CD4-positive, alpha-beta T cell (primary cell): ENCODE measurements at regions of chr11 and their contacts with region 1.

Region 1: DNA sequence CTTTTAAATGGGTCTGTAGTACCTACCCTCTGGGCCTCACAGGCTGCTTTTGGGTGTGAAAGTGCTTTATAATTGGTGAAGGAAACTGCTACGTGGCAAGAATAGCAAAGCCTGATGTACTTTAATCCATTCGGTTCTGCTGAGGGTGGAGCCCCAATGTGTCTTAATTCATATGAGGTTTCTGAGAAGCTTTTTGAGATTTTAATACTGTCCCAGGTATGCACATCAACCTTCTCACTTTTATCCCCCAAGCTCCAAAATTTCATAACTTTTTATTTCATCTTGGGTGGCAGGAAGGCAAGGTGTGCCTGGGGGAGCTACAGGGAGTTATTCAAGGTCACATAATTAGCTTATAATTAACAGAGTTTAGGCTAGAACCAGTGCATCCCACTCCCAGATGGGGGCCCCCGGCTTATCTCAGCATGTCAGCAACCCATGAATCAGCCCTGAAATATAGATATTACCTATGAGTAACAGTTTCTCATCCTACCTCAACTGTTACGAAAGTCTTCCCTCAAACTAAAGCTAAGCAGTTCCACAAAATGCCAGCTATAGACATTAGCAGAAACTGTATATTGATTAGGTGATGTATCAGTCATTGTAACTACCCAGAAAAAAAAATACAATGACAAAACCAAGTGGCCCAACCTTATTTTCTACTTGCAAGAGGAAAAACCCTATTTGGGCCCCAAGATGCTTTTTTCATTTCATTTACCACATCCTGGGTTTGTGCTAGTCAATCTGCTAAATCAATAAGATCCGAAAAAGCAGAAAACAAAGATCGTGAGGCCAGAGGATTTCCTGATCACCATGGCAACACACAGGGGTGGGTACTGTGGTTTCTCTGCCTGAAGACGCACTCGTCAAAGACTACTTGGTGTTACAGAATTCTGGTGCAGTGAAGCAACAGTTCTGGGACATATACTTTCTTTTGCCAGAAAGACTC is 26.7 kb downstream of the CD44 start:
- DNase-seq: peak; percentile 70 to 99 (median 80)
- ATAC-seq: peak; percentile 69
- H3K4me3 ChIP-seq: peak overlapping the region; percentile 40
- H3K4me3 Mint-ChIP-seq: peak overlapping the region; percentile 72
- H3K27ac ChIP-seq: peak overlapping the region; percentile 96
- H3K27ac Mint-ChIP-seq: peak overlapping the region; percentile 96
- H3K4me1 ChIP-seq: peaks cover 97% of the 10 kb centered on the region
- H3K4me1 Mint-ChIP-seq: peaks cover 100% of the 10 kb centered on the region
- H3K27me3 ChIP-seq: no peaks in the 10 kb centered on the region
- H3K27me3 Mint-ChIP-seq: no peaks in the 10 kb centered on the region
- CTCF ChIP-seq: no peak

Region 2: GRCh38 chr11:34105079-34105956 is 1060.4 kb before region 1 on chr11 and contains the start of gene NAT10:
- CTCF ChIA-PET with region 1: no interaction called
- POLR2A ChIA-PET with region 1: no interaction called
- intact Hi-C with region 1: loop called in 1 of 2 experiments (anchors 10 kb)
- DNase-seq: peak; percentile 94 to 100 (median 97)
- ATAC-seq: peak; percentile 90
- H3K4me3 ChIP-seq: peak within 1 kb of the TSS; percentile 81
- H3K4me3 Mint-ChIP-seq: peak within 1 kb of the TSS; percentile 95
- H3K27ac ChIP-seq: peak within 1 kb of the TSS; percentile 91 to 95
- H3K27ac Mint-ChIP-seq: peak within 1 kb of the TSS; percentile 99
- H3K4me1 ChIP-seq: peaks cover 31% of the 10 kb centered on the region
- H3K4me1 Mint-ChIP-seq: peaks cover 69% of the 10 kb centered on the region
- H3K27me3 ChIP-seq: no peaks in the 10 kb centered on the region
- H3K27me3 Mint-ChIP-seq: peaks cover 4% of the 10 kb centered on the region
- CTCF ChIP-seq: no peak
- total RNA-seq, gene NAT10: 50.1 to 55.6 TPM

Region 3: GRCh38 chr11:35040221-35040942 is 125.3 kb before region 1 on chr11:
- CTCF ChIA-PET with region 1: interaction called, 3 read pairs
- POLR2A ChIA-PET with region 1: interaction called, 34 read pairs
- intact Hi-C with region 1: loop called in 1 of 2 experiments (anchors 2 kb)
- DNase-seq: peak; percentile 37 to 92 (median 57)
- ATAC-seq: peak; percentile 79
- H3K4me3 ChIP-seq: peak overlapping the region; percentile 55
- H3K4me3 Mint-ChIP-seq: peak overlapping the region; percentile 81
- H3K27ac ChIP-seq: peak overlapping the region; percentile 84 to 88
- H3K27ac Mint-ChIP-seq: peak overlapping the region; percentile 92
- H3K4me1 ChIP-seq: peaks cover 43% of the 10 kb centered on the region
- H3K4me1 Mint-ChIP-seq: peaks cover 72% of the 10 kb centered on the region
- H3K27me3 ChIP-seq: no peaks in the 10 kb centered on the region
- H3K27me3 Mint-ChIP-seq: no peaks in the 10 kb centered on the region
- CTCF ChIP-seq: no peak

Region 4: DNA sequence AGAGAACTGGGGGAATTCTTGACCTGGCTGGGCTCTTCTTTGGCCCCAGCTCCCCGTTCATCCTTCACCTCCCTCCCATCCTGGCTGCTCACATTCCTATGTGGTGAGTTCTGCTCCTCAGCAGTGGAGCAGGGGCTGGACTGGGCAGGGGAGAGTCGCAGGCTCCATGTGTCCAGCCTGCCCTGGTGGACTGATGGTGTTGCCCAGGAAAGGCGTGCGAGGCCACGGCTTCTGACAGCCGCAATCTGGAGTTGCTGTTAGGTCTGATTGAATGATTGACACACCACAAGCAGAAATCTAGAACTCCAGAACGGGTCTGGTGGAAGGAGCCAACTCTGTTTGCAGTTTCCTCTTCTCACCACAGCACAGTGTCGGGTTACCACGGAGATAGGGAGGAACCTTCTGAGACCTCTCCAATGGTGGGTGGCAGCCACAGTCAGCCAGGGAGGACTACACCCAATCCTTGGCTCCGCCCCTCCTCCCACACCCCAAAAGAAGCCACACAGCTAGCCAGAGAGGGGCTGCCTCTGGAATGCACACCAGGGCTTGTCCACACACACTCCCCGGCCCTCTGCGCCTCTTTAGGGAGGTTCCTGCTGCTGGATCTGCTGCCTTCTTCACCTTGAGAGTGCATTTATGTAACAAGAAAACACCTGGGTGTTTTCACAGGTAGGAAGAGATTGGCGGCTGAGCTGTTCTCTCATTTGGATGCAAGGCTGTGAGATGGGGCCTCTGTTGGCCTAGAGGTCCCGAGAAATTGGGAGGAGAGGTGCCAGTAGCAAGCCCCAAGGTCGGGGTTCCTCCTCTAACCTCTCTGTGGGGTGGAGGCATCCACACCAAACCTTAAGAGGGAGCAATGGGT is 83.1 kb before region 1 on chr11:
- CTCF ChIA-PET with region 1: no interaction called
- POLR2A ChIA-PET with region 1: interaction called, 18 read pairs
- intact Hi-C with region 1: loop called (anchors 1 to 5 kb)
- DNase-seq: peak; percentile 74 to 96 (median 83)
- ATAC-seq: peak; percentile 77
- H3K4me3 ChIP-seq: peak overlapping the region; percentile 47
- H3K4me3 Mint-ChIP-seq: peak overlapping the region; percentile 83
- H3K27ac ChIP-seq: peak overlapping the region; percentile 95 to 99
- H3K27ac Mint-ChIP-seq: peak overlapping the region; percentile 98
- H3K4me1 ChIP-seq: peaks cover 84% of the 10 kb centered on the region
- H3K4me1 Mint-ChIP-seq: peaks cover 97% of the 10 kb centered on the region
- H3K27me3 ChIP-seq: no peaks in the 10 kb centered on the region
- H3K27me3 Mint-ChIP-seq: no peaks in the 10 kb centered on the region
- CTCF ChIP-seq: peak; percentile 17

Region 5: DNA sequence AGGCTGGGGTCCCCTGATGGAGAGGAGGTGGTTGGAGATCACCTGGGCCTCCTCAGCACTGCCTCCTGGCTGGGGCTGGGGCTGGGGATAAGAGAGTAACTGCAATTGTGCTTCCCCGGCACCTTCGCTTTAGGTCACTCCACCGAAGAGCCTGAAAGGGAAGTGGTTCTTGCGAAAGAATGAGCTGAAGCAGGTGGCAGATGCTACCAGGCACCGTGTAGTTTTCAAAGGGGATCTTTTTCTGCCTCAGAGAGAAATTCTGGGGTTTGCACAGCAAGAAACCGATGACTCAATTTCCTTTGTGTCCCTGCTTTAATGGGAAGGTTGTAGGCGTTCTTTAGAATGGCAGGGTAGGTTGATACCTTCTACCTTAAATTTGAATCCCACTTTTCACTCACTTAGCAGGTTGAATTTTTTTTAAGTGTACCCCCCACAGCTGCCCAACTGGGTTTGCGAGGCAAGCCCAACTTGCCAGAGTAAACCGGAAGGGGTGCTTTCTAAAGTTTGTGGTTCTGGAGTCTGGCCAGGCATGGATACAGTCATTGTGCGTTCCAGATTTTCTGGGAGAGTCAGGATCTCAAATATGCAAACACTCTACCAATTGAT is 21.5 kb before region 1 on chr11:
- CTCF ChIA-PET with region 1: interaction called, 9 read pairs
- POLR2A ChIA-PET with region 1: interaction called, 317 read pairs
- intact Hi-C with region 1: loop called (anchors 2 kb)
- DNase-seq: peak in 13 of 14 experiments; percentile 46 to 88 (median 61)
- ATAC-seq: peak; percentile 64
- H3K4me3 ChIP-seq: peak overlapping the region; percentile 88
- H3K4me3 Mint-ChIP-seq: peak overlapping the region; percentile 84
- H3K27ac ChIP-seq: peak overlapping the region; percentile 73 to 81
- H3K27ac Mint-ChIP-seq: peak overlapping the region; percentile 96
- H3K4me1 ChIP-seq: peaks cover 82% of the 10 kb centered on the region
- H3K4me1 Mint-ChIP-seq: peaks cover 83% of the 10 kb centered on the region
- H3K27me3 ChIP-seq: no peaks in the 10 kb centered on the region
- H3K27me3 Mint-ChIP-seq: no peaks in the 10 kb centered on the region
- CTCF ChIP-seq: no peak

Region 6: DNA sequence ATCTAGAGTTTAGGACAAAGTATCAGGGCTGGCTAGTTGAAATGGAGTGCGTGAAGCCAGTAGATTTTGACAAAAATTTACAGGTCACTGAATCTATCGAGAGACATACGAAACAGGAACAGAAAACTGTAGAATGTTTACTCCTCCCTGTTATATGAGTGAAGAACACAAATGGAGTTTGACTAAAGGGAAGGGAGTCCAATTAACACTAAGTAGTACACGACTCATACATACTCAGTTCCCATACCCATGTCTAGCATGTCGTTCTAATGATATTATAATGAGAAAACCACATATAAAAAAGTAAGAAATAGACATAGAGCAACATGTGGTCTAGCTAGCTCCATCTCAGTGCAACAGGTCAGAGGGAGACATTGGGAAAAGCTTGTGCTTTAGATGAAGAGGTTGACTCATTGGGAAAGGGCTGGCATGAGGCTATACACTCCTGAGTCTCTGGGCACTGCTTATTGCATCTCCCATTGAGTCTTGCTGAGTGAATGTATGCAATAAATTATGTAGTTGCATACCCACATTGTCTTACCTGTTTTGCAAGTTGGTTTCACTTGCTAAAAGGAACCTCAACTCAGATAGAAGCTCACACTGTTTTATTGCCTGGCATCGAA is 16.7 kb after region 1 on chr11:
- CTCF ChIA-PET with region 1: interaction called, 8 read pairs
- POLR2A ChIA-PET with region 1: interaction called, 355 read pairs
- intact Hi-C with region 1: loop called in 1 of 2 experiments (anchors 1 kb)
- DNase-seq: no peak
- ATAC-seq: no peak
- H3K4me3 ChIP-seq: no peak overlapping the region
- H3K4me3 Mint-ChIP-seq: peak overlapping the region; percentile 69
- H3K27ac ChIP-seq: peak overlapping the region in 1 of 2 donors; percentile 24
- H3K27ac Mint-ChIP-seq: peak overlapping the region; percentile 80
- H3K4me1 ChIP-seq: peaks cover 56% of the 10 kb centered on the region
- H3K4me1 Mint-ChIP-seq: peaks cover 97% of the 10 kb centered on the region
- H3K27me3 ChIP-seq: no peaks in the 10 kb centered on the region
- H3K27me3 Mint-ChIP-seq: no peaks in the 10 kb centered on the region
- CTCF ChIP-seq: no peak

Region 7: DNA sequence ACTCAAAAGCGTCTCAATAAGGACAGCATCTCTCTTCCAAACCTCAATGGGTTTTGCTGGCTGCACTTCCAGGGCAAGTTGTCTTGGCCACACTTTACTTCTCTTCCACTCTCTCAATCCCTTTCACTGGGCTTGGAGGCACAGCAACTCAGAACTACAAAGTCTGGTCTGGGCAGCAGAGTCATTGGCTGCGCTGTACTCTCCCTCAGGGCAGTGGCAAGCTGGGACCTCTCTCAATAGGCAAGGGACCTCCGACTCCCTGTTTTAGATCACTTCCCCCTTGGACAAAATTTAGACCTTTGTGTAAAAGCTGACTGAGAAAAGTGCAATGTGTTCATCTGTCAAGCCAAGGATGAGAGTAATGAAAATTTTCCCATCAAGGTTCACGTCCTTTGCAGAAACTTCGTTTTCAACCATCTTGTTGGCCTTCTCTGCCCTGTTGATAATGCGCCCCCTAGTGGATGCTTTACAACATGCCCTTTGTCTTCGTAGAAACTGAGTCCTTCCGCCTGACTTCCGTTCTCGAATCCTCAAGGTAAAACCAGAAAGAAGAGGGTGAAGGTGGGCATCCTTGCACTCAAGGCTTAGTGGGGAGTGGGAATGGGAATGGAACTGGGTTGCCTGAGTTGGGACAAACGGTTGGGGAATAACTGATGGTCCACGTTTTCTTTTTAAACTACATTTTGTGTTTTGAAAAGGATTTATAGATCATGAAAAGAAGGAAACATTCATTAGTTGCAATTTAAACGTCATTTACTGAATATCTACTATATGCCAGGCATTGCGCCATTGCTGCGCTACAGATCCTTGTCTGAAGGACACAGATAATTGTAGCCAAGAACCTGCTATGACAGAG is 72.4 kb after region 1 on chr11:
- CTCF ChIA-PET with region 1: no interaction called
- POLR2A ChIA-PET with region 1: interaction called, 3 read pairs
- intact Hi-C with region 1: loop called in 1 of 2 experiments (anchors 5 kb)
- DNase-seq: peak in 8 of 14 experiments; percentile 23 to 83 (median 50)
- ATAC-seq: no peak
- H3K4me3 ChIP-seq: no peak overlapping the region
- H3K4me3 Mint-ChIP-seq: peak overlapping the region; percentile 39
- H3K27ac ChIP-seq: no peak overlapping the region
- H3K27ac Mint-ChIP-seq: peak overlapping the region; percentile 77
- H3K4me1 ChIP-seq: peaks cover 47% of the 10 kb centered on the region
- H3K4me1 Mint-ChIP-seq: peaks cover 85% of the 10 kb centered on the region
- H3K27me3 ChIP-seq: no peaks in the 10 kb centered on the region
- H3K27me3 Mint-ChIP-seq: no peaks in the 10 kb centered on the region
- CTCF ChIP-seq: peak; percentile 74